Activated CD8-positive, alpha-beta T cell treated with anti-CD3 and anti-CD28 coated beads, Interleukin-2, amount 10 ng/mL, durations not matched to agents 7 days and 5 days (primary cell): ENCODE measurements at regions of chr11 and their contacts with region 1.

Region 1: DNA sequence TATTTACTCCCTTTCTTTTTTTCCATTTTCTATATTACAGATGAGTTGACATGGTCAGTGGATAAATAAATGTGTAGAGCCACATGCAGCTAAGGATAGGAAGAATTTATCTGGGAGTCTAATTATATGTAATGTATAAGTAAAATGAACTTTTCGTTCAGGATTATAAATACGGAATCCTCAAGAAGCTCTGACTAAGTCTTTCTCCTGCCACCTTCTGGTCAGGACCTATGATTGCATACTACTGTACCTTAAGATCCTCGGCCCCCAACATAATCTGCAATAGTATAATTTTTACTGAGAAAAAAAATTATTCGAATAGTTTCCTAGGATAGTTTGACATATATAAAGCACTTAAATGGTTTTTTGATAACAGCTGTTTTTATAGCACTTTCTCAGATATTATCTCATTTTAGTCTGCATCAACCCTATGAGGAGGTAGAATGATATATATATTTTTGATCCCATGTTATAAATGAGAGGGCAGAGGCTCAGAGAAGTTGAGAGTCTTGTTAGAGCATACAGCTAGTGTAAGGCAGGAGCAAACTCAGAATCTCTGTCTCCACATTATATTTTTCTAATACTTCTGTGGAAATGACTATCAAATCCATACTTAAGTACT is 36.1 kb downstream of the CCDC90B start:
- DNase-seq: peak; percentile 33
- ATAC-seq: no peak
- H3K4me3 Mint-ChIP-seq: no peak overlapping the region
- H3K27ac Mint-ChIP-seq: no peak overlapping the region
- H3K4me1 Mint-ChIP-seq: peaks cover 7% of the 10 kb centered on the region
- H3K27me3 Mint-ChIP-seq: no peaks in the 10 kb centered on the region

Region 2: GRCh38 chr11:82906244-82906654 is 343.8 kb before region 1 on chr11:
- CTCF ChIA-PET with region 1: interaction called, 11 read pairs
- POLR2A ChIA-PET with region 1: interaction called, 5 read pairs
- DNase-seq: no peak
- ATAC-seq: no peak
- H3K4me3 Mint-ChIP-seq: no peak overlapping the region
- H3K27ac Mint-ChIP-seq: no peak overlapping the region
- H3K4me1 Mint-ChIP-seq: peaks cover 48% of the 10 kb centered on the region
- H3K27me3 Mint-ChIP-seq: no peaks in the 10 kb centered on the region

Region 3: GRCh38 chr11:83044958-83045712 is 204.9 kb before region 1 on chr11:
- CTCF ChIA-PET with region 1: no interaction called
- POLR2A ChIA-PET with region 1: no interaction called
- DNase-seq: no peak
- ATAC-seq: peak; percentile 53
- H3K4me3 Mint-ChIP-seq: no peak overlapping the region
- H3K27ac Mint-ChIP-seq: no peak overlapping the region
- H3K4me1 Mint-ChIP-seq: peaks cover 14% of the 10 kb centered on the region
- H3K27me3 Mint-ChIP-seq: no peaks in the 10 kb centered on the region

Region 4: DNA sequence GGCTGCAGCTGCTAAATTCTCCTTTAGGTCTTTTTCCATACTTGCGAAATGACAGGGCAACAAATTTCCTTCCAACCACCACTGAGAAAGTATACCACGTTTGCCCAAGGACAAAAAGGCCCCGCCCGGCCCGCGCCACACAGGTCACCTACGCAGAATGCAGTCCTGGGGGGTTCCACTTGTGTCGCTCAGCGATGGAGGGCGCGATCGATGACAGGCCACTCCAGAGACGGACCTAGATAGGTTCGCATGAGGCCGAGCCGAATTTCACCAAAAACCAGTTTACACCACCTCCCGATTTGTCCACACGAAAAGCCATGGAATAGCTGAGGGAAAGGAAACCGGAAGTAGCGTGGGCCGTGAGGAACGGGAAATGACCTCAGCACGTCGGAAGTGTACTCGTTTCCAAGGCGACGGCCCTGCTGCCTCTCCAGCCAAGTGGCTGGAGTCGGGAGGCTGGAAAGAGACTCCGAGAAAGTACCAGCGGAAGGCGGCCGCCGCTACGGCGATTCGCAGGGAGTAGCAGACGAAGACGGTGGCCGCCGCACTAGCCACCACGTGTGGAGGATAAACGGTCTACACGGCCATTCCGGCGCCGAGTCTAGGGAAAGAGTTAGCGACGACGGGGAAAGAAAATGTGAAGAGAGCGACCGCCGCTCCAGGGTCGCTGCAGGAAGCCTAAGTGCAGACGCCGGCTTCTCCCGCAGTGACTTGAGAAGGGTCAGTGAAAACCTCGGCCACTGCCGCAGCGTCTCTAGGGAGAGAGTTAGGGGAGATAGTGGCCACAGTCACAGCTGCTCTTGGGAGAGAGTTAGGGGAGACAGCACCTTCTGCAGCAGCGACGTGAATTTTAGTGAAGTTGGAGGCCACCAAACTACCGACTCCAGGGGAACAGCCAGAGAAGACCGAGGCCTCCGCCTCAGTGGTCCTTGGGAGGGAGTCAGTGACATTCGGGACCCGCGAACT is 56.5 kb before region 1 on chr11 and contains the start of gene ANKRD42:
- CTCF ChIA-PET with region 1: interaction called, 12 read pairs
- POLR2A ChIA-PET with region 1: no interaction called
- DNase-seq: peak; percentile 91
- ATAC-seq: peak; percentile 77
- H3K4me3 Mint-ChIP-seq: peak within 1 kb of the TSS; percentile 92
- H3K27ac Mint-ChIP-seq: peak within 1 kb of the TSS; percentile 99
- H3K4me1 Mint-ChIP-seq: peaks cover 41% of the 10 kb centered on the region
- H3K27me3 Mint-ChIP-seq: no peaks in the 10 kb centered on the region
- total RNA-seq, gene ANKRD42: 4.2 to 4.5 TPM

Region 5: DNA sequence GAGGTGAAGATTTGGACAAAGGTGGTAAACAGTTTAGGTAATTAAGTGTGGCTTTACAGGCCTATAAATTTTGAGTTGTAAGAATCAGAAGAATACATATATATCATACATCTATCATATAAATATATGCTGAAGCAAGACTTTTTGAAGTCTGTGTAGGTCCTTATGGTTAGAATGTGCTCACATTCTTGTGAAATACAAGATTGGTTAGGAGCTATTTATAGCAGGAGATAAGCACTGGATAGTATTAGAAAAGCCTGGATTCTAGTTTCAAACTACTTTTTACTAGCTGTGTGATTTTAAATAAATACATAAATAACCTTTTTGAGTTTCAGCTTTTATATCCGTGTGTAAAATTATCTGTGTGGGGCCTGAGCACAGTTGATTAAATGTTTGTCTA is 14.3 kb before region 1 on chr11:
- CTCF ChIA-PET with region 1: interaction called, 24 read pairs
- POLR2A ChIA-PET with region 1: no interaction called
- DNase-seq: no peak
- ATAC-seq: no peak
- H3K4me3 Mint-ChIP-seq: no peak overlapping the region
- H3K27ac Mint-ChIP-seq: no peak overlapping the region
- H3K4me1 Mint-ChIP-seq: no peaks in the 10 kb centered on the region
- H3K27me3 Mint-ChIP-seq: no peaks in the 10 kb centered on the region

Region 6: GRCh38 chr11:83374311-83374710 is 124.2 kb after region 1 on chr11:
- CTCF ChIA-PET with region 1: no interaction called
- POLR2A ChIA-PET with region 1: no interaction called
- DNase-seq: no peak
- ATAC-seq: no peak
- H3K4me3 Mint-ChIP-seq: no peak overlapping the region
- H3K27ac Mint-ChIP-seq: no peak overlapping the region
- H3K4me1 Mint-ChIP-seq: no peaks in the 10 kb centered on the region
- H3K27me3 Mint-ChIP-seq: peaks cover 2% of the 10 kb centered on the region

Region 7: GRCh38 chr11:83389975-83390374 is 139.9 kb after region 1 on chr11:
- CTCF ChIA-PET with region 1: no interaction called
- POLR2A ChIA-PET with region 1: no interaction called
- DNase-seq: no peak
- ATAC-seq: no peak
- H3K4me3 Mint-ChIP-seq: no peak overlapping the region
- H3K27ac Mint-ChIP-seq: no peak overlapping the region
- H3K4me1 Mint-ChIP-seq: no peaks in the 10 kb centered on the region
- H3K27me3 Mint-ChIP-seq: no peaks in the 10 kb centered on the region